Aorta (tissue), 5 donors: ENCODE measurements at regions of chr11 and their contacts with region 1.

Region 1: DNA sequence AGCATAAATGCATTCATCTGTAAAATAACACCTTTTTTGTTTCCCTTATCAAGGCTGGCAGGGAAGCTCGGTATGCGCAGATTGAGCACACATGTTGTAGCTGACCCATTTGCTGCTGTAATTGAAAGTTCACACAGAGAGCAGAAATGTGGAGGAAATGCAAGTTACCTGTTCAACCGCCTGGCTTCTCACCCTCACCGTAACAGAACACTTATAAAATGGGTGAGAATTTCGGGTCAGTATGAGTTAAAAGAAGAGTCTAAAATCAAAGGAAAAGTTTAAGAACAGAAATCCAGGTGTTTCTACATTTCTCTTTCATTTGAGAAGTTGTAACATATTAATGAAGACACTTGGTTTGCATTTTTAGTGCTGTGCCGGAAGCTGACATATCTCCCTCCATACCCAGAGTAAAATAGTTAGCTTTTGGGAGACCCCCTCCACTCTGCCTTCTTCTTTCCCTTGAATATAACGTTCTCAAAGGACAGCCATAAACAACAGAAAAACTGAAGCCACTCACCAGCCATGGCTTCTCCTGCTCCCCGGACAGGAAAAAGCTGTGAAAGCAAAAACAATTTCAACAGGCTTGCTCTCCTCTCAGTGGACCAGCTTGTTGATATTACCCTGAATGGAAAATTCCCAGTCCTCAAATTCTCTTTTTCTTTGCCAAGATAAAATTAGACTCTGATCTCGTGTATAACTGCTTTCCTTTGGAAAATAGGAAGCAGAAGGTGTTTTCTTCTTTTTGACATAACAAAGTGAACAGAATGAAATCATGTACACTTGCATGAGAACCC is at the start of gene CASP12:
- DNase-seq: no peak
- ATAC-seq: peak; percentile 79
- H3K4me3 ChIP-seq: peak within 1 kb of the TSS; percentile 98 to 99
- H3K27ac ChIP-seq: peak within 1 kb of the TSS; percentile 71 to 76
- H3K4me1 ChIP-seq: peaks cover 6% of the 10 kb centered on the region in 2 donors
- H3K27me3 ChIP-seq: no peaks in the 10 kb centered on the region
- total RNA-seq, gene CASP12: 2.6 to 5.0 TPM

Region 2: DNA sequence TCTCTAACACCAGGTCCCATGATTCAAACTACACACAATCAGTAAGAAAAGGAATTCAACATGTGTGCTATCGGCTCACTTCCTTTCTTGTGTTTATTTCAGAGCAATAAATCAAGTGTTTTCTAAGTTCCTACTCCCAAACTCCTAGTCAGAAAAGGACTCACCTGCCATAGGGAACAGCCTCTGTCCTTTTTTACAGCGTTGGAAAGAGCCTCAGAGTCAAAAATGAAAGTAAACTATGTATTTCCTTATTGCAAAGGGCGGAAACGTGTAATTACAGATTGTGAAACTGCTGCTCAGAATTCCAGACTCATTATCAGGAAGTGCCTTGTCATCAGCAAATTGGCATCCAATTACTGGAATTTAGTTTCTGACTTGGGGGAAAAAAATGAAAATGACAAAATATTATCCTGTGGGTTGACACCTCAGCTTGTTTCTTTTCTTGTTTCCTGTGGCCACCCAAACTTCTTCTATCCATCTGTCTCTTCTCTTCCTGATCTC is 70.3 kb after region 1 on chr11 and contains the start of gene CASP4:
- intact Hi-C with region 1: loop called in 1 of 2 experiments (anchors 5 kb)
- DNase-seq: no peak
- ATAC-seq: peak; percentile 91
- H3K4me3 ChIP-seq: peak within 1 kb of the TSS; percentile 97 to 100
- H3K27ac ChIP-seq: peak within 1 kb of the TSS; percentile 67 to 77
- H3K4me1 ChIP-seq: peaks cover 3% of the 10 kb centered on the region in 2 donors
- H3K27me3 ChIP-seq: no peaks in the 10 kb centered on the region
- total RNA-seq, gene CASP4: 55.5 to 103 TPM